HAP-1 (cell line): ENCODE measurements at regions of chr12 and their contacts with region 1.

Region 1: GRCh38 chr12:2783936-2784600 is 10.7 kb upstream of the FKBP4 start:
- DNase-seq: peak; percentile 48 to 77
- H3K4me3 ChIP-seq: no peak overlapping the region
- H3K4me1 ChIP-seq: no peaks in the 10 kb centered on the region
- H3K27me3 ChIP-seq: peaks cover 18% of the 10 kb centered on the region

Region 2: GRCh38 chr12:1457901-1458300 is 1326.2 kb before region 1 on chr12:
- in situ Hi-C with region 1: no loop called
- DNase-seq: no peak
- H3K4me3 ChIP-seq: no peak overlapping the region
- H3K4me1 ChIP-seq: no peaks in the 10 kb centered on the region
- H3K27me3 ChIP-seq: no peaks in the 10 kb centered on the region

Region 3: GRCh38 chr12:2583091-2583497 is 201.0 kb before region 1 on chr12:
- in situ Hi-C with region 1: no loop called
- DNase-seq: peak; percentile 28 to 82
- H3K4me3 ChIP-seq: no peak overlapping the region
- H3K4me1 ChIP-seq: no peaks in the 10 kb centered on the region
- H3K27me3 ChIP-seq: peaks cover 16% of the 10 kb centered on the region; the same call in 1 of the 2 replicates

Region 4: GRCh38 chr12:2682296-2683251 is 101.5 kb before region 1 on chr12:
- in situ Hi-C with region 1: loop called (anchors 10 kb)
- DNase-seq: peak; percentile 29 to 61
- H3K4me3 ChIP-seq: no peak overlapping the region
- H3K4me1 ChIP-seq: no peaks in the 10 kb centered on the region
- H3K27me3 ChIP-seq: no peaks in the 10 kb centered on the region